ENCODE measurements at regions of chr15 and their contacts with region 1.

Region 1: DNA sequence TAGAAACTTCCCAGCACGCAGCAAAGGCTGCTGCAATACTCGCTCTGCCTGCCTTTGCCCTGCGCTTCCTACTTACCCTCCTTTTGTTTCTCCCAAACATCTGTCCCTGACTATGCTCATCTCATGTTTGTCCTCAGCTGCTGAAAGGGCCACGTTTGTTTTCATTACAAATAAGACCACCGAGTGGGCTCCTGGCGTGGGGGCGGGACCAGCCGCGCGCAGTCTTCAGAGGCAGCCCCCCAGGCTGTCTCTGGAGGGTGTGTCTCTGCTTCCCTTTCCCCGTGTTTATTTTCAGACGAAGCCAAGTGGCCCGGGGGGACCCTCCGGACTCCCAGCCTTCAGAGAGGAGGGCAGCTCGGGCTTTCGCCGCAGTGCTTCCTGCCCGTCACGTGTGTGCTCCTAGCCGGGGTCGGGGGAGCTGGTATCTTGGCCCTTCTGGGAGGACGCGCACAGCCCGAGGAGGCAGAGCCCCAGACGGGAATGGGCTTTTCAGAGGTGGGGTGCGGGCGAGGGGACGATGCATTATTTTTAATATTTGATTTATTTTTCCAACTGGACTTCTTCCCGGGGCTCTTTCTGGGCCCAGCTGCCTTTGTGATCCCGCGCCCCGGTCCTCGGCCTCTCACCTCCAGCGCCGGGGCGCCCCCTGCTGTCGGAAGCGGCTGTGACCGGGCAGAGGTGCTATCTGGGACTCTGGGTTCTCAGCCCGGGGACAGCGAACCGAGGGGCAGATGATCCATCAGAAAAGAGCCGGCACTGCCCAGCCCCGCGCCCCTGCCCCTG is 70.0 kb upstream of the CGNL1 start:
- DNase-seq: peak; percentile 91
- ATAC-seq: peak; percentile 71
- H3K4me3 Mint-ChIP-seq: peak overlapping the region; percentile 90
- H3K27ac Mint-ChIP-seq: peak overlapping the region; percentile 88
- H3K4me1 Mint-ChIP-seq: peaks cover 76% of the 10 kb centered on the region
- H3K27me3 Mint-ChIP-seq: no peaks in the 10 kb centered on the region
- CTCF ChIP-seq: peak; percentile 45

Region 2: GRCh38 chr15:56464893-56465520 is 841.3 kb before region 1 on chr15 and contains the start of gene MNS1:
- CTCF ChIA-PET with region 1: no interaction called
- POLR2A ChIA-PET with region 1: no interaction called
- intact Hi-C with region 1: loop called (anchors 10 kb)
- DNase-seq: peak; percentile 84
- ATAC-seq: peak; percentile 95
- H3K4me3 Mint-ChIP-seq: peak within 1 kb of the TSS; percentile 92
- H3K27ac Mint-ChIP-seq: peak within 1 kb of the TSS; percentile 97
- H3K4me1 Mint-ChIP-seq: peaks cover 21% of the 10 kb centered on the region
- H3K27me3 Mint-ChIP-seq: no peaks in the 10 kb centered on the region
- CTCF ChIP-seq: no peak
- total RNA-seq, gene MNS1: 0.62 and 0.66 TPM in 2 replicates

Region 3: DNA sequence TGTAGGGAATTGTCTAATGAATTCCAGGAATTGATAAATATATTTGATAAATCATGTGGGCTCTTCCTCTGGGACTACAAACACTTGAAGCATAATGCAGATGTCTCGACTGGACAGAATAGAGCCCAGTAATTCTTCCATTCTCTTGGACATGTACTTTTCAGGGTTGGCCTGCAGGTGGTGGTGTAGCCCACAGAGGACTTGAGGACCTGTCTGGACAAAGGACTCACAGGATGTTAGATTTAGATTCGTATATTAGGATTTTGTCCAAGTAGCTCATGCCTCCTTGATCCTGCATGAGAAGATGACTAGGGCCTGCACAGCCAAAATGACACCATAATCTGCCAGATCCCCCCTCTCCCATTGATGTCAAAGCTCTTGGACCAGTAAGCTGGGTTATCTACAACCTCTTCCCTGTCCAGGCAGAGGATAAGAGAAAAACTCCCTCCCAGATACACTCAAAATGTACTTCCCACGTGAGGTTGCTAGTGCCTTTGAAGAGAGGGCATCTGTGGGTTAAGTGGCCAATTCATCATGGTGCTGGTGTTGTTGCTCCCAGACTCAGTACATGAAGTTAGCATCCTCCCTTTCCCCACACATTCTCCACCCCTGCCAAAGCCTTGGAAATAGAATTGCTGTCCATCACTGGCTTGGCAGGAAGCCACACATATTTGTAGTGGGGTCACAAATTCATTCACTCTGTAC is 484.5 kb before region 1 on chr15:
- CTCF ChIA-PET with region 1: interaction called, 9 read pairs
- POLR2A ChIA-PET with region 1: no interaction called
- intact Hi-C with region 1: loop called (anchors 1 kb)
- DNase-seq: no peak
- ATAC-seq: peak; percentile 68
- H3K4me3 Mint-ChIP-seq: no peak overlapping the region
- H3K27ac Mint-ChIP-seq: no peak overlapping the region
- H3K4me1 Mint-ChIP-seq: peaks cover 4% of the 10 kb centered on the region
- H3K27me3 Mint-ChIP-seq: no peaks in the 10 kb centered on the region
- CTCF ChIP-seq: peak; percentile 16

Region 4: GRCh38 chr15:57198654-57199291 is 107.6 kb before region 1 on chr15:
- CTCF ChIA-PET with region 1: interaction called, 15 read pairs
- POLR2A ChIA-PET with region 1: interaction called, 4 read pairs
- intact Hi-C with region 1: no loop called
- DNase-seq: no peak
- ATAC-seq: no peak
- H3K4me3 Mint-ChIP-seq: no peak overlapping the region
- H3K27ac Mint-ChIP-seq: no peak overlapping the region
- H3K4me1 Mint-ChIP-seq: peaks cover 2% of the 10 kb centered on the region
- H3K27me3 Mint-ChIP-seq: no peaks in the 10 kb centered on the region
- CTCF ChIP-seq: no peak

Region 5: DNA sequence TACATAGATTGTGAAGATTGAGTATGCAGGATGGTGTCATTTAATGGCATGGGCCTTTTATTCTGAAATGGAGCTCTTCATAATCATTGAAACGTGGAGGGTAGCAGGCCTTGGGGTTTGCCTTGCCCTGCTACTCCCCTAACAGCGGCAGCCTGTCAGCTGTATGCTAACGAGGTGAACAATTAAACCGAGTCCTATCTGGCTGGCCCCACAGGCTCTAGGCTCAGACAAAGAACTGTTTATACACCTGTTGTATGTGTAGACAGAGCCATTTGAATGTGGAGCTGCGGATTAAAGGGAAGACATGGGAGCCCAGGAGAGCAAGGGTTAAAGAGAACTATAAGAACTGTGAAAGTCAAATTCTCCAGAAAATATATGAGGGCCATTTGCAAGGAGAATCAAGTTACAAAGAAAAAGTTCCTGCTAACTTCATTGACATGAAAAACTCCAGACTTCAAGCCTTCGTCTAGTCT is 46.7 kb before region 1 on chr15:
- CTCF ChIA-PET with region 1: interaction called, 13 read pairs
- POLR2A ChIA-PET with region 1: interaction called, 22 read pairs
- intact Hi-C with region 1: loop called (anchors 1 kb)
- DNase-seq: peak; percentile 28
- ATAC-seq: peak; percentile 99
- H3K4me3 Mint-ChIP-seq: peak overlapping the region; percentile 67
- H3K27ac Mint-ChIP-seq: peak overlapping the region; percentile 84
- H3K4me1 Mint-ChIP-seq: peaks cover 18% of the 10 kb centered on the region
- H3K27me3 Mint-ChIP-seq: no peaks in the 10 kb centered on the region
- CTCF ChIP-seq: no peak

Region 6: GRCh38 chr15:57356636-57357035 is 50.3 kb after region 1 on chr15:
- CTCF ChIA-PET with region 1: no interaction called
- POLR2A ChIA-PET with region 1: no interaction called
- intact Hi-C with region 1: no loop called
- DNase-seq: no peak
- ATAC-seq: no peak
- H3K4me3 Mint-ChIP-seq: no peak overlapping the region
- H3K27ac Mint-ChIP-seq: no peak overlapping the region
- H3K4me1 Mint-ChIP-seq: no peaks in the 10 kb centered on the region
- H3K27me3 Mint-ChIP-seq: peaks cover 2% of the 10 kb centered on the region
- CTCF ChIP-seq: no peak

Region 7: DNA sequence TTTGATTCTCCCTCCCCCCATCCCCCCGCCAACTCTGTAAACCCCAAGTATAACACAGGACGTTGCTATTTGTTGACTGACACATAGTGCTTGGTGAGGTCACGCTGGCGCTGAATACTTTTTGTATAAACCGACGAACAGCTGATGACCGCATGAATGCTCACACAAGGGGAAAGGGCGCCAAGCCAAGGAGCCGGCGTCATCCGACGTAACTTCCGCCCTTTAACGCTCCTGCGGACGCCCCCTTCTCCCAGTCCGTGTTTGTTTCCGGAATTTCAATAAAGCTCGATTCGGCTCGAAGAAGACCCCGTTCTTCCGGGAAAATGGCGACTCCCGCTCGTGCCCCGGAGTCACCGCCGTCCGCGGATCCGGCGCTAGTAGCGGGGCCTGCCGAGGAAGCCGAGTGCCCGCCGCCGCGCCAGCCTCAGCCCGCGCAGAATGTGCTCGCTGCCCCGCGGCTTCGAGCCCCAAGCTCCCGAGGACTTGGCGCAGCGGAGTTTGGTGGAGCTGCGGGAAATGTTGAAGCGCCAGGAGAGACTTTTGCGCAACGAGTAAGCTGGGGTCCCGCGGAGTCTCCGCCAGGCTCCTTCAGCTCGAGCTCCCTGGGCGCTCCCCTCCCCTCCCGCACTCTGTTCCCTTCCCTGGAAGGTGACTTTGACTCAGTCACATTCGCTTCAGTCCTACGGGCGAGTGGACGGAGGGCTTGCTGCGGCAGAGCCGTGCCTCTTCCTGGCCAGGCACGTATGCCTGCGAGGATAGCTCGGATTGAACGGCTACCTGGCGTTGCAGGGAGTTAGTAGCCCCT is 400.3 kb after region 1 on chr15 and contains the start of gene POLR2M:
- CTCF ChIA-PET with region 1: no interaction called
- POLR2A ChIA-PET with region 1: interaction called, 6 read pairs
- intact Hi-C with region 1: loop called (anchors 10 kb)
- DNase-seq: peak; percentile 71
- ATAC-seq: peak; percentile 92
- H3K4me3 Mint-ChIP-seq: peak within 1 kb of the TSS; percentile 87
- H3K27ac Mint-ChIP-seq: peak within 1 kb of the TSS; percentile 88
- H3K4me1 Mint-ChIP-seq: peaks cover 36% of the 10 kb centered on the region
- H3K27me3 Mint-ChIP-seq: peaks cover 6% of the 10 kb centered on the region
- CTCF ChIP-seq: no peak
- total RNA-seq, gene POLR2M: 53.8 and 65.2 TPM in 2 replicates